Activated T-helper 2 cell treated with anti-CD3 and anti-CD28 coated beads, Interferon-gamma antibody, Interleukin-2, Interleukin-4, amounts not matched to agents 10 μg/mL and 5 μg/mL and 100 μg/mL, durations not matched to agents 14 hours and 24 hours and 36 hours (primary cell): ENCODE measurements at regions of chr10 and their contacts with region 1.

Region 1: GRCh38 chr10:17228091-17228940 is at the start of gene VIM:
- DNase-seq: peak; percentile 82
- H3K4me3 Mint-ChIP-seq: peak within 1 kb of the TSS; percentile 89
- H3K27ac Mint-ChIP-seq: peak within 1 kb of the TSS; percentile 98
- H3K4me1 Mint-ChIP-seq: peaks cover 51% of the 10 kb centered on the region
- H3K27me3 Mint-ChIP-seq: peaks cover 3% of the 10 kb centered on the region
- total RNA-seq, gene VIM: 337 and 342 TPM in 2 replicates

Region 2: DNA sequence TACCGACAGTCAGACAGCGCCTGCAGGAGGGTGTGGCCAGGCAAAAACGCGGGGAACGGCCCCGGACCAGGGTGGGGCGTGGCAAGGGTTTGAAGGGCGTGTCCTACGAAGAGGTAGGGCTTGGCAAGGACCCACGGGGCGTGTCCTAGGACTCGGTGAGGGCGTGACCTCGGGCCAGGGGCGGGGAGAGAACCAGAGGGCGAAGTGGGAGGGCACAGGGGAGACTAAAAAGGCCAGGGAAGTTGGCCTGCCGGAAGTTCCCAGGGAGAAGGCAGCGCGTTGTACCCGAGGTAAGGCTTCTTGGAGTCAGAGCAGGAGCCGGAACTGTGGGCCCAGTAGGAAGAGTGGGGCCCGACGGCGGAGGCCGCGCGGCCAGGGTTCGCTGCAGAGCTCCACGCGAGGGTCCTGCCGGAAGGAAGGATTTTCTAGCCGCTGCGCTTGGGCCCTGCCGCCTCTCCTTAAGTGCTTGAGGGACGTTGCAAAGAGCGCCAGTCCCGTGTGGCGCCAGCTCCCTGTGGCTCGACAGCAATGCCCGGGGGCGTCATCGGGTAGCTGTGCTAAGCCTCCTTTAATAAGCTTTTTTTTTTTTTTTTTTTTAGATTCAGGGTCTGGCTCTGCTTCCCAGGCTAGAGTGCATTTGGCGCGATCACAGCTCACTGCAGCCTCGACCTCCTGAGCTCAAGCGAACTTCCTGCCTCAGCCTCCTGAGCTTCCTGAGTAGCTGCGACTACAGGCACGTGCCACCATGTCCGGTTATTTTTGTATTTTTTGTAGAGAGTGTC is 791.4 kb before region 1 on chr10 and contains the start of gene PTER:
- intact Hi-C with region 1: loop called (anchors 5 kb)
- DNase-seq: peak; percentile 97
- H3K4me3 Mint-ChIP-seq: peak within 1 kb of the TSS; percentile 93
- H3K27ac Mint-ChIP-seq: peak within 1 kb of the TSS; percentile 93
- H3K4me1 Mint-ChIP-seq: peaks cover 36% of the 10 kb centered on the region
- H3K27me3 Mint-ChIP-seq: peaks cover 11% of the 10 kb centered on the region
- total RNA-seq, gene PTER: 18.9 and 19.9 TPM in 2 replicates

Region 3: GRCh38 chr10:16817125-16818019 is 410.9 kb before region 1 on chr10 and contains the start of gene RSU1:
- intact Hi-C with region 1: loop called (anchors 1 kb)
- DNase-seq: peak; percentile 100
- H3K4me3 Mint-ChIP-seq: peak within 1 kb of the TSS; percentile 93
- H3K27ac Mint-ChIP-seq: peak within 1 kb of the TSS; percentile 79
- H3K4me1 Mint-ChIP-seq: peaks cover 27% of the 10 kb centered on the region
- H3K27me3 Mint-ChIP-seq: peaks cover 10% of the 10 kb centered on the region
- total RNA-seq, gene RSU1: 49.1 and 54.0 TPM in 2 replicates

Region 4: DNA sequence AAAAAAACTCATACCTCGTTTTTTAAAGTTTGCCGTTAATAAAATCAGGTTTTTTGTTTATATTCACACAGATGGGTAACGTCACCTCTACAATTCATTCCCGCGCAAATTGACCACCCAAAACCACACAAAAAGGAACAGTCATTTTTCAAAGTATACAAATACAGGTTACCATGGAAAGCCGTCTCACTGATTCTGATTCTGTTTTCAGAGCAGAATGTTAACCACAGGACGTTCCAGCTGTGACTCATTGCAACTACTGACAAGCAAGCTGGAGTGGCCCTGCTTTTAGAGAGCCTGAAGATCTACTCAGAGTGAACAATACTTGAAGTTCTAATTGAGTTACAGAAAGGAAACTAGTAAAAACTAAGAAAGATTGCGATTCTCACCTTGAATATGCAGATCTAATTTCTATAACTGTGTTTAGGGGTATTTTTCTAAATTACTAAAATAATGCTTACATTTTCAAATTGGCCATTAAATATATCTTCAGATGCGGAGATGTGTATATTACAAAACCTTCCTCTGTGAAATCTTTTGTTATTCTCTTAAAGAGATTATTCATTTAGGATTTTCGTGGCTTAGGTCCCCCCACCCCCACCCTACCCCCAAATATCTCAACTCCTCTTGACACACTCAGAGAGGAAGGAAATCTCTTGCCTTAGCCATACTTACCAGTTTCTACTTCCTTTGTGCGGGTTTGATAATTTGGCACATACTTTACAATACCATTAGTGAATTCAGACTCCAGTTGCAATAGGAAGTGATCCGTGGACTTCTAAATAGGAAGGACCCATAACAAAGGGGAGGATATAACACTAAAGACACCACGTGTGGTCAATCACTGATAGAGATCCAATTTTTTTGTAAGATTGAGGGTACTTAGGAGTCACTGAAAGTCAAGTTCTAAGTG is 204.7 kb before region 1 on chr10:
- intact Hi-C with region 1: loop called (anchors 1 kb)
- DNase-seq: peak; percentile 78
- H3K4me3 Mint-ChIP-seq: peak overlapping the region; percentile 53
- H3K27ac Mint-ChIP-seq: peak overlapping the region; percentile 96
- H3K4me1 Mint-ChIP-seq: peaks cover 50% of the 10 kb centered on the region
- H3K27me3 Mint-ChIP-seq: peaks cover 22% of the 10 kb centered on the region

Region 5: GRCh38 chr10:17200912-17201793 is 27.2 kb before region 1 on chr10 and contains the start of gene TRDMT1:
- intact Hi-C with region 1: loop called (anchors 1 kb)
- DNase-seq: peak; percentile 77
- H3K4me3 Mint-ChIP-seq: peak within 1 kb of the TSS; percentile 96
- H3K27ac Mint-ChIP-seq: peak within 1 kb of the TSS; percentile 77
- H3K4me1 Mint-ChIP-seq: peaks cover 49% of the 10 kb centered on the region
- H3K27me3 Mint-ChIP-seq: peaks cover 7% of the 10 kb centered on the region
- total RNA-seq, gene TRDMT1: 3.2 and 4.2 TPM in 2 replicates

Region 6: GRCh38 chr10:17257466-17258321 is 29.4 kb after region 1 on chr10:
- intact Hi-C with region 1: loop called (anchors 1 kb)
- DNase-seq: peak; percentile 40
- H3K4me3 Mint-ChIP-seq: no peak overlapping the region
- H3K27ac Mint-ChIP-seq: no peak overlapping the region
- H3K4me1 Mint-ChIP-seq: peaks cover 13% of the 10 kb centered on the region
- H3K27me3 Mint-ChIP-seq: peaks cover 12% of the 10 kb centered on the region